PC-9 (cell line): ENCODE measurements at regions of chr7 and their contacts with region 1.

Region 1: DNA sequence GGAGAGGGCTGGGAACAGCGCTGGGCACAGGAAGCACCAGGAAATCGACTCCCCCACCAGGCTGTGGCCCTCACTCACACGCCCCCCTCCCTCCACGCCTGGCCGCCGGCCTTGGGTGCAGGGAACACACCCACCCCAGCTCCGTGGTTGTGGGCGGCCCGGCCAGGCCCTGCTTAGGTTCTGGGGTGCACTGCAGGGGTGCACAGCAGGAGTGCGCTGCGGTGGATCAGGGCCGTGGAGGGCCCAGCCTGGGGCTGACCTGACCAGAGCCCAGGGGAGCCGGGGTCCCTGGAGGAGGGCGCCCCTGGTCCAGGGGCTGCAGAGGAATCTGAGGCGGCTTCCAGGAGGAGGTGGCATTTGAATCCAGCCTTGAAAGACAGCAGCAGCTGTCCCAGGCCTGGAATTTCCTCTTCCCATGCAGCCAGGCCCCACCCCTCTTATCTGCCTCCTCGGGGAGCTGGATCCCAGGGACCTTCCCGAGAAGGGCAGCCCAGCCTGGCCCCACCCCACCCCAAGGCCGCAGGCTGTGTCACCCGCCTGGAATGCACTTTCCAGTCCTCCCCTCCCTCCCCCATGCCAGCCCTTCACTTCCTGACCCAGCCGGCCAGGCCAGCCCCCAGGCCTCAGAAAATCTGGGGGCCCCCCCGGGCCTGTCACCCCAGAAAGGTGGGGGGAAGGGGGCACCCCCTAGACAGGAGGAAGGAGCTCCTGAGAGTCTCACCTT is 18.4 kb upstream of the PDGFA start:
- DNase-seq: peak; percentile 89 to 98
- H3K4me3 ChIP-seq: peak overlapping the region; percentile 60
- H3K27ac ChIP-seq: peak overlapping the region; percentile 99
- H3K4me1 ChIP-seq: peaks cover 52% of the 10 kb centered on the region
- H3K27me3 ChIP-seq: no peaks in the 10 kb centered on the region
- CTCF ChIP-seq: no peak

Region 2: GRCh38 chr7:332646-333392 is 205.3 kb before region 1 on chr7:
- CTCF ChIA-PET with region 1: interaction called, 4 read pairs
- POLR2A ChIA-PET with region 1: no interaction called
- intact Hi-C with region 1: loop called (anchors 1 kb)
- DNase-seq: peak in 1 of 2 experiments; percentile 91
- H3K4me3 ChIP-seq: peak overlapping the region; percentile 58; the same call in 1 of the 2 replicates
- H3K27ac ChIP-seq: no peak overlapping the region
- H3K4me1 ChIP-seq: peaks cover 9% of the 10 kb centered on the region; the same call in 1 of the 2 replicates
- H3K27me3 ChIP-seq: peaks cover 47% of the 10 kb centered on the region
- CTCF ChIP-seq: peak; percentile 87

Region 3: DNA sequence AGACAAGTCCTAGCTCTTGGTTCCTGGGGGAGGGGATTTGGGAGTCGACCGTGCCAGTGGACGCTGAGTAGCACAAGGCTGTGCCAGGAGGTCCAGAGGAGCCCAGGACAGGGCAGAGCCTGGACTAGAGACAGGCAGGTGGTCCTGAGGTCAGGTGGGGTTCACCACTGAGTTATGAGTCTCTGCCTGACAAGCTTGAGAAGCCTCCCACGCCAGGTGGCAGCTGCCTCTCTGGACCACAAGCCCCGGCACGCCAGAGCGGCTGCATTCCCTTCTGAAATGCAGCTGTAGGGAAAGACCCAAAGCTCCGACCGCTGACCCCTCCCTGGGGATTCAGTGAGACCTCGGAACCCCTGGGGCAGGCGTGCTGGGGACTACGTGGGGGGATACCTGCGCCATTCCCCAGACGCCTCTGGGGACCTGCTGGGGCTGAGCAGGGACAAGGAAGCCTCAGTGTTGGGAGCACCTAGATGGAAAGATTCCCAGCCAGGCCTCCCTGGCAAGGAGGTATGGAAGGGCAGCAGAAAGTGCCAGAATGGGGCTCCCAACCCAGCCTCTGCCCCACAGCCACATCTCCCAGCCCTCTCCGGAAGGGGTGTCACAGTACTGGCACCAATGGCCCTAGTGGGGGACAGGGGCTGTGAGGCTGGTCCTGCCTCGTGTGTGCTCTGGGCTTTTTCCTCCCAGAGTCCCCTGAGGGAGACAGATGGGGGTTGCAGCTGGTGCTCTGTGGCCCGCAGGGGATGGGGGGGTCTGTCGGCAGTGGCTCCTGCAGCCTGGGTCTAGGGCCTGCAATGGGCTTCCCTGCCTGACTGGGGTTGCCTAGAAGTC is 47.4 kb before region 1 on chr7:
- CTCF ChIA-PET with region 1: no interaction called
- POLR2A ChIA-PET with region 1: no interaction called
- intact Hi-C with region 1: no loop called
- DNase-seq: no peak
- H3K4me3 ChIP-seq: no peak overlapping the region
- H3K27ac ChIP-seq: no peak overlapping the region
- H3K4me1 ChIP-seq: no peaks in the 10 kb centered on the region
- H3K27me3 ChIP-seq: peaks cover 55% of the 10 kb centered on the region
- CTCF ChIP-seq: no peak

Region 4: DNA sequence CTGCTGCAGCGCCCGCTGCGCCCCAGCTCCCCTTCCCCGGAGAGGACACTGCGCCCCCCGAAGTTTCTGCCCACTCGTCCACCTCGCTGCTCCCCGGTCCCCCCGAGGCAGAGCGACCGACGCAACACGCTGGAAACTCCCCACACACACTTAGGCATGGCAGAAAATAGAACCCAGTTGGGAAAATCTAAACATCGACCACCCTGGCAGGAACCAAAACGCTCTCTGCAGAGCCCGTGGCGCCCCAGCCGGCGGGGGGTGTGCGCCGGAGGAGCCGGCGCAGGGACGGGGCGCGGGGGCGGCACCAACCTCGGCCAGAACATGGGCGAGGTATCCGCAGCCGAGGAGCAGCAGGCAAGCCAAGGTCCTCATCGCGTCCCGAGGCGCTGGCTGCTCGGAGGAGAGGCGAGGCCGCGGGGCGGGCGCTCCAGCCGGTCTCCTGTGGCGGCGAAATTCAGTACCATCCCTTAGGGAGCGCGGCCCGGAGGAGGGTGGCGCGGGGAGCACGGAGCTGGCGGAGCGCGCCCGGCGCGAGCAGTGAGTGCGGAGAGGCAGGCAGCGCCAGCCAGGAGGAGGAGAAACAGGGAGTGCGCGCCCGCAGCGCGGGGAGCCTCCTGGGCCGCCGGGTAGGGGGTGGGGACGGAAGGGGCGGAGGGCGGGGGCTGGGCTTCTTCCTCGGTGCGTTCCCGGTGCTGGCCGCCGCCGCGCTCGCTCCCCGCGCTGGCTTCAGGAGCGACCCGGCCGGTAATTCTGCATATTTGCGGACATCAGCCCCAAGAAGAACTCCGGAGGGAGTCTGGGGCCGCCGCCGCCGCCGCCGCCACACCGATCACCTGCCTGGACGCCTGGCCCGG is 19.2 kb before region 1 on chr7:
- CTCF ChIA-PET with region 1: no interaction called
- POLR2A ChIA-PET with region 1: interaction called, 13 read pairs
- intact Hi-C with region 1: loop called (anchors 2 kb)
- DNase-seq: peak; percentile 62 to 93
- H3K4me3 ChIP-seq: peak overlapping the region; percentile 95
- H3K27ac ChIP-seq: peak overlapping the region; percentile 17; the same call in 1 of the 2 replicates
- H3K4me1 ChIP-seq: peaks cover 10% of the 10 kb centered on the region; the same call in 1 of the 2 replicates
- H3K27me3 ChIP-seq: no peaks in the 10 kb centered on the region
- CTCF ChIP-seq: no peak

Region 5: DNA sequence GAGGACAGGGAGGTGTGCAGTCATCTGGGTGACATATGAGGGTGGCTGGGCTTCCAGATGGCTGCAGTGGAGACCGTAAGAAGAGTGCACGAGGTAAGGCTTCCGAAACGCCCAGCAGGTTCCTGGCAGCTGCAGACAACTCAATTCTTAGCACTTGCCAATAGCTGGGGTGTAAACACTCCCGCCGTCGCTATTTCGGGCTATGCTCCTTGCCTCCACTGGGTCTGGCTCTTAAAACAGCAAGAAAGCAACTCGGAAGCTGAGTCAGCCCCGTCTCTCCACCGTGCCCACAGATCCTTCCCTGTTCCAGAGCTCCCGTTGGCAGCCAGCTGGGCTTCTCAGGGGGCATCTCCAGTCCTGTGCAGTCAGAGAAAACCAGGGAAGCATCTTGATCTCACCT is 12.3 kb before region 1 on chr7:
- CTCF ChIA-PET with region 1: interaction called, 3 read pairs
- POLR2A ChIA-PET with region 1: interaction called, 6 read pairs
- intact Hi-C with region 1: loop called (anchors 1 kb)
- DNase-seq: peak in 1 of 2 experiments; percentile 33
- H3K4me3 ChIP-seq: no peak overlapping the region
- H3K27ac ChIP-seq: no peak overlapping the region
- H3K4me1 ChIP-seq: peaks cover 46% of the 10 kb centered on the region
- H3K27me3 ChIP-seq: no peaks in the 10 kb centered on the region
- CTCF ChIP-seq: no peak

Region 6: GRCh38 chr7:618539-619367 is 80.7 kb after region 1 on chr7:
- CTCF ChIA-PET with region 1: interaction called, 12 read pairs
- POLR2A ChIA-PET with region 1: no interaction called
- intact Hi-C with region 1: loop called (anchors 1 kb)
- DNase-seq: no peak
- H3K4me3 ChIP-seq: no peak overlapping the region
- H3K27ac ChIP-seq: no peak overlapping the region
- H3K4me1 ChIP-seq: peaks cover 31% of the 10 kb centered on the region
- H3K27me3 ChIP-seq: no peaks in the 10 kb centered on the region
- CTCF ChIP-seq: no peak

Region 7: DNA sequence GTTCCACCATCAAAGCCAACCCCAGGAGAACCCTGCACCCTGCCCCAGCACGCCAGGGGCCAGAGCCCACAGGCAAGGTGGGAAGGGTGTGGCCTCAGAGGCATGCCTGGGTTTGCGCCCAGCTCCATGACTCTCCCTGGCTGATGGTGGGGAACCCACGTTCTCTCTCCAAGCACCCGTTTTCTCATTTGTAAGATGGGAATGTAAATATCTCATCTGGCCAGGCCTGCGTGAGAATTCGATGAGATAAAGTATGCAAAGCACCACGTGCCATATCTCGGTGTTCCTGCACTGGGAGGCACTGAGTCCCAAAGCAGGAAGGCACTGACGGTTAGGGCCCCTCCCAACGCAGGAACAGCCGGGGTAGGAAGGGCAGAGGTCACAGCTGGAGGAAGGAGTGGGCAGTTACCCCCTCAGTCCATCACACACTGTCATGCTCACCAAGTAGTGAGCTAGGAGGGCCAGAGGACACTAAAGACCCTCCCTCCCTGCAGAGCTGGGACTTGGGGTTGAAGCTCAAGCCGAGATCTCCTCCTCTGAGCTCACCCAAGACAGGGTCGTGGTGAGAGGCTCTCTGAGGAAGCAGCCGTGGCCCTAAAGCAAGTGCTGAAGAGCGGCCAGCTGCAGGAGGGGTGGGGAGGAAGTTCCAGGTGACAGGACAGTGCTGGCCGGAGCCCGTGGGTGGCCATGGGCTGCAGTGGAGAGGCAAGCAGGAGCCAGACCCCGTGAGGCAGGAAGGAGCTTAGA is 161.2 kb after region 1 on chr7:
- CTCF ChIA-PET with region 1: no interaction called
- POLR2A ChIA-PET with region 1: no interaction called
- intact Hi-C with region 1: no loop called
- DNase-seq: no peak
- H3K4me3 ChIP-seq: no peak overlapping the region
- H3K27ac ChIP-seq: no peak overlapping the region
- H3K4me1 ChIP-seq: no peaks in the 10 kb centered on the region
- H3K27me3 ChIP-seq: no peaks in the 10 kb centered on the region
- CTCF ChIP-seq: no peak

Region 8: GRCh38 chr7:732094-732541 is 194.0 kb after region 1 on chr7:
- CTCF ChIA-PET with region 1: no interaction called
- POLR2A ChIA-PET with region 1: no interaction called
- intact Hi-C with region 1: loop called (anchors 5 kb)
- DNase-seq: peak; percentile 83 to 87
- H3K4me3 ChIP-seq: no peak overlapping the region
- H3K27ac ChIP-seq: peak overlapping the region; percentile 35; the same call in 1 of the 2 replicates
- H3K4me1 ChIP-seq: peaks cover 23% of the 10 kb centered on the region
- H3K27me3 ChIP-seq: no peaks in the 10 kb centered on the region
- CTCF ChIP-seq: peak; percentile 48; the same call in 1 of the 2 replicates